Activated CD4-positive, alpha-beta T cell treated with anti-CD3 and anti-CD28 coated beads for 36 hours (primary cell): ENCODE measurements at regions of chr20 and their contacts with region 1.

Region 1: GRCh38 chr20:44960103-44960852 is at the start of gene TOMM34:
- DNase-seq: peak; percentile 98
- ATAC-seq: peak; percentile 91
- H3K4me3 Mint-ChIP-seq: peak within 1 kb of the TSS; percentile 94
- H3K27ac Mint-ChIP-seq: peak within 1 kb of the TSS; percentile 99
- H3K4me1 Mint-ChIP-seq: peaks cover 61% of the 10 kb centered on the region
- H3K27me3 Mint-ChIP-seq: no peaks in the 10 kb centered on the region
- total RNA-seq, gene TOMM34: 56.5 to 61.2 TPM

Region 2: DNA sequence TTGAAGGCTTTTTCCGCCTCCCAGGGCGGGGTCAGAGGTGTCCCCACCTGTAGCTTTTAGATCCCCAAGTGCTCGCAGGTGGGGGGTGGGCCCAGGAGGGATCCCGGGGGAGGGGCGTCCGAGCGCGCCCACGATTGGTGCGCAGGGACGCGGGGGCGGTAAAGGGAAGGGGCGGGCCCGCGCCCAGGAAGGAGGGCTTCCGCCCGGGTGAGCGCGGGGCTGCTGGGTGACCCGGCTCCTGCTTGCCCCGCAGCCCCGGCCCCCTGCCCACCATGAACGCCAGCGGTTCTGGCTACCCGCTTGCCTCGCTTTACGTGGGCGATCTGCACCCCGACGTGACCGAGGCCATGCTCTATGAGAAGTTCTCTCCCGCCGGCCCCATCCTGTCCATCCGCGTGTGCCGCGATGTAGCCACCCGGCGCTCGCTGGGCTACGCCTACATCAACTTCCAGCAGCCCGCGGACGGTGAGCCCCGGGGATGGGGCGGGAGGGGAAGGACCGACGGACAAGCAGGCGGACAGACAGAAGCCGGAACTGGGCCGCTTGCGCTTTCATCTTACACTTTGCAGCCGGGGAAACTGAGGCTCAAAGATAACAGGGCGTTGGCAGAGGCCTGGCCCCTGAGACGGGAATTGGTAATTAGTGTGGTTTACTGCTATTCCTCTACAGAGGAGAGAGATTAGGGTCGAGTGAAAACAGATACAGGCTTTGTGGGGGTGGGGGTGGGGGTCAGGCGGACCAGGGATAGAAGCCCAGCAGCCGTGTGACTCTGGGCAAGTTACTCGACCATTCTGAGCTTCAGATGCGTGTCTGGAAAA is 50.2 kb before region 1 on chr20 and contains the start of gene PABPC1L:
- CTCF ChIA-PET with region 1: no interaction called
- POLR2A ChIA-PET with region 1: interaction called, 3 read pairs
- intact Hi-C with region 1: loop called (anchors 1 to 5 kb)
- DNase-seq: peak; percentile 86
- ATAC-seq: peak; percentile 90
- H3K4me3 Mint-ChIP-seq: peak within 1 kb of the TSS; percentile 78
- H3K27ac Mint-ChIP-seq: peak within 1 kb of the TSS; percentile 64
- H3K4me1 Mint-ChIP-seq: peaks cover 34% of the 10 kb centered on the region
- H3K27me3 Mint-ChIP-seq: no peaks in the 10 kb centered on the region
- total RNA-seq, gene PABPC1L: 61.7 to 71.3 TPM

Region 3: DNA sequence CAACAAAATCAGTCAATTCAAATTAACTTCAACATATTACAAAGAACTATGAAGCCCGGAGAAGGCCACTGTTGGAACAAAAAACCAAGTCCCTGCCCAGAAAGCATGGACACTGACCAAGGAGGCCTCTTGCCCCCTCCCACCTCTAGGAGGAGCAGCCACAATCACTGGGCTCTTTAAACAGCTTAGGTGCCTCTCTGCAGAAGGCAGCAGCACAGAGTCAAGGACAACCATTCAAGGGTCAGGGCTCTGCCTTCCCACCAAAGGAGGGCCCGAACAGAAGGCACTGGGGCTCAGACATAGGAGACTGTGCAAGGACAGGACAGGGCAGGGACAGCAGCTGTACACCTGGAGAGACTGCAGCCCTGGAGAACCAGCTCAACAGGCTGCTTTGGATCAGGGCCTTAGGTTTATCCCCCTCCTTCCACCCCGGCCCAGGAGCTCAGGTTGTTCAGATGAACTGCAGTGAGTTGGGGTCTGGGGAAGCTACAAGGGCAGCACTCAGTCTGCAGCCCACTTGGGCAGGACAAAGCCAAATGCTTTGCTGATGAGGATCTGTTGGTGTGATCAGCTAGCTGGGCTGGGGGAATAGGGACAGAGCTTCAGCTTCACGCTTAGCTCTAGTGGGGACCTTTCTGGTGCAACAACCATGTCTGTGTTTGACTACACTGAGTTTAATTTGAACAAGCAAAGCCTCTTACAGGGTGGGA is 17.9 kb before region 1 on chr20:
- CTCF ChIA-PET with region 1: interaction called, 4 read pairs
- POLR2A ChIA-PET with region 1: interaction called, 15 read pairs
- intact Hi-C with region 1: no loop called
- DNase-seq: no peak
- ATAC-seq: no peak
- H3K4me3 Mint-ChIP-seq: no peak overlapping the region
- H3K27ac Mint-ChIP-seq: peak overlapping the region; percentile 0
- H3K4me1 Mint-ChIP-seq: peaks cover 10% of the 10 kb centered on the region
- H3K27me3 Mint-ChIP-seq: no peaks in the 10 kb centered on the region

Region 4: GRCh38 chr20:44979090-44979621 is 18.9 kb after region 1 on chr20:
- CTCF ChIA-PET with region 1: interaction called, 6 read pairs
- POLR2A ChIA-PET with region 1: interaction called, 13 read pairs
- intact Hi-C with region 1: no loop called
- DNase-seq: peak; percentile 74
- ATAC-seq: peak; percentile 75
- H3K4me3 Mint-ChIP-seq: peak overlapping the region; percentile 10
- H3K27ac Mint-ChIP-seq: peak overlapping the region; percentile 95
- H3K4me1 Mint-ChIP-seq: peaks cover 90% of the 10 kb centered on the region
- H3K27me3 Mint-ChIP-seq: no peaks in the 10 kb centered on the region

Region 5: GRCh38 chr20:44990425-44990824 is 30.1 kb after region 1 on chr20:
- CTCF ChIA-PET with region 1: interaction called, 4 read pairs
- POLR2A ChIA-PET with region 1: interaction called, 4 read pairs
- intact Hi-C with region 1: loop called in 1 of 2 experiments (anchors 5 kb)
- DNase-seq: peak; percentile 81
- ATAC-seq: peak; percentile 90
- H3K4me3 Mint-ChIP-seq: peak overlapping the region; percentile 70
- H3K27ac Mint-ChIP-seq: peak overlapping the region; percentile 94
- H3K4me1 Mint-ChIP-seq: peaks cover 78% of the 10 kb centered on the region
- H3K27me3 Mint-ChIP-seq: no peaks in the 10 kb centered on the region

Region 6: DNA sequence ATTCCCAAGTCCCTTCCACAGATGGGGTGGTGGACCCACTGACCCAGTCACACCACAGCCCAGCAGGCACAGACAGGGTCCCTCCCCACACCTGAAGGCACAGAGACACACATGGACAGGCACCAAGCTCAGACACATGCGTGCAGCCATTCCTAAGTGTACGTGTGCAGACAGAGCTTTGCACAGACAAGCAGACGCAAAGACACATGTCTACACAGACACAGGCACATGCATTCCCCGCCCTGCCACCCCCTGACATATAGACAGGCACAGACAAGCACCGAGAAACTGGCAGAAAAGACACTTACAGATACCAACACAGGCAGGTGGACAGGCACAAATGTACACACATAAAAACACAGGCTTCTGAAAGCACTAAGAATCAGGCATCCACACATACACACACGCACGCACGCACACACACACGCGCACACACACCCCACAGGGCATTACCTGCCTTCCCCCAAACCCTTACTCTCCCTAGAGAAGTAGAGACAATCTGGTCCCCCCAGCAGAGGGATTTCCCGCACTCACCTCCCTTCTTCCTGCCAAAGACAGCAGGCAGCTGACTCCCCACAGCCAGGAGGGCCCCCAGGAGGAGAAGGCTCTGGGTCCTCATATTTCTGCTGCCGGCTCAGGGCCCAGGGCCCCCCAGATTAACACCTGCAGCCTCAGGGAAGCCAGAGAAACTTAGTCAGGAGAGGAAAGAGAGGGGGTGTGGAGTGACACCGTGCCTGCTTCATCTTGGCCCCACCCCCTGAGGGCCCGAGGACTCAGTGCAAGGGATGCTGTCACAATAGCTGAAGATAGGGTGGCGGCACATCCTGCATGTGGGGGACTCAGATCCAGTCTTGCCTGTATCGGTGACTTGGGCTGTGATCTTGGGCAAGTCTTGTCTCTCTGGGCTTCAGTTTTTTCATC is 154.4 kb after region 1 on chr20 and contains the start of gene WFDC5:
- CTCF ChIA-PET with region 1: no interaction called
- POLR2A ChIA-PET with region 1: no interaction called
- intact Hi-C with region 1: no loop called
- DNase-seq: peak; percentile 55
- ATAC-seq: peak; percentile 81
- H3K4me3 Mint-ChIP-seq: no peak within 1 kb of the TSS
- H3K27ac Mint-ChIP-seq: no peak within 1 kb of the TSS
- H3K4me1 Mint-ChIP-seq: peaks cover 4% of the 10 kb centered on the region
- H3K27me3 Mint-ChIP-seq: peaks cover 6% of the 10 kb centered on the region
- total RNA-seq, gene WFDC5: 0.23 TPM